ENCODE measurements at regions of chr7 and their contacts with region 1.

Region 1: GRCh38 chr7:91852263-91852741 is 28.2 kb downstream of the MTERF1 start:
- DNase-seq: peak; percentile 64
- ATAC-seq: peak; percentile 64
- H3K4me3 ChIP-seq: no peak overlapping the region
- H3K27ac ChIP-seq: no peak overlapping the region
- H3K4me1 ChIP-seq: peaks cover 16% of the 10 kb centered on the region
- H3K27me3 ChIP-seq: no peaks in the 10 kb centered on the region
- CTCF ChIP-seq: peak; percentile 68

Region 2: DNA sequence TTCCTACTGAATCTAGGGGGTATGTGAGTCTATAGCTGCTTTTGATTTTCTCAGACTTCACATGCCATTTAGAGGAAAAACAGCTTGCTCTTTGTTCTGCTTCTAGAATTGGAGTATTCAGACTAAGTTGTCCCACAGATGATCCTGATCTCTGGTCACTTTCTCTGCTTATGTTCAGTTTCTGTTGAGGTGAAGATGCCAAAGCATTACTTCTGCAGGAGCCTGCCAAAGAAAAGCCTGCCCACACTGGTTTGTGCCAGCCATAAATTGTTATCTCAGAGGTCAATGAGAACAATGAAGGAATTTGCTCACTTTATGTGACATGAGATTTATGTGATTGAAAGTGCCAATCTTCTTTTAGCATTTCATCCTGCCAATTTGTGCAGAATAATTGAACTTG is 1092.6 kb before region 1 on chr7:
- CTCF ChIA-PET with region 1: no interaction called
- POLR2A ChIA-PET with region 1: no interaction called
- intact Hi-C with region 1: no loop called
- DNase-seq: no peak
- ATAC-seq: no peak
- H3K4me3 ChIP-seq: no peak overlapping the region
- H3K27ac ChIP-seq: no peak overlapping the region
- H3K4me1 ChIP-seq: peaks cover 12% of the 10 kb centered on the region; the same call in 1 of the 2 replicates
- H3K27me3 ChIP-seq: no peaks in the 10 kb centered on the region
- CTCF ChIP-seq: no peak

Region 3: GRCh38 chr7:91826377-91826776 is 25.9 kb before region 1 on chr7:
- CTCF ChIA-PET with region 1: interaction called, 14 read pairs
- POLR2A ChIA-PET with region 1: no interaction called
- intact Hi-C with region 1: loop called (anchors 1 kb)
- DNase-seq: peak; percentile 57
- ATAC-seq: peak; percentile 79
- H3K4me3 ChIP-seq: no peak overlapping the region
- H3K27ac ChIP-seq: no peak overlapping the region
- H3K4me1 ChIP-seq: peaks cover 7% of the 10 kb centered on the region; the same call in 1 of the 2 replicates
- H3K27me3 ChIP-seq: no peaks in the 10 kb centered on the region
- CTCF ChIP-seq: no peak

Region 4: GRCh38 chr7:91892821-91893340 is 40.6 kb after region 1 on chr7:
- CTCF ChIA-PET with region 1: no interaction called
- POLR2A ChIA-PET with region 1: no interaction called
- intact Hi-C with region 1: no loop called
- DNase-seq: peak; percentile 86
- ATAC-seq: peak; percentile 87
- H3K4me3 ChIP-seq: no peak overlapping the region
- H3K27ac ChIP-seq: peak overlapping the region; percentile 19
- H3K4me1 ChIP-seq: peaks cover 23% of the 10 kb centered on the region
- H3K27me3 ChIP-seq: no peaks in the 10 kb centered on the region
- CTCF ChIP-seq: no peak